ENCODE measurements at regions of chr1 and their contacts with region 1.

Region 1: DNA sequence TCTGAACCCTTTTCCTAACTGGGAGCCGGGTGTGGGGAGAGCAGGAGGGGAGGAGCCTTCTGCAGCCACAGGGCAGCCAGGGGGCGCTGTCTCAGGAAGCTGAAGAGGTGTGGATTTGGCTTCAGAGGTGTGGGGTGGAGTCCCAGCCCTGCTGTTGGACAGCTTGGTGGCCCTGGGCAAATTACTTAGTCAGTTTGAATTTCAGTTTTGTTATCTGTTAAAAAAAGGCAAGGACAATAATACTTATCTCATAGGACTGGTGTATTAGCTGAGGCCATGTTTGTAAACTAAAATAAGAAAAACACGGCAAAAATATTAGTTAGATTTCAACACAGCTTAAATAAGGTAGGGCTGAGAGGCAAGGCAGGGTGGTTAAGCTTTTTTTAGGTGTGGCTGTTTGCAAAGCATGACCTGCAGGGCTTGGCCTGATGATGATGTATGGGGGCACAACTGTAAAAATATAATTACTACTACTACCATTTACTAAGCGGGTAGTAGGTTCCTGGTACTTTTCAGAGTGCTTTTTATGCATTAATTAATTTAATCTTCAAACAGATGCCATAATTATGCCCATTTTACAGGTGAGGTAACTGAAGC is 111.8 kb downstream of the PLXNA2 start:
- DNase-seq: peak; percentile 70
- ATAC-seq: peak; percentile 89
- H3K4me3 Mint-ChIP-seq: no peak overlapping the region
- H3K27ac Mint-ChIP-seq: no peak overlapping the region
- H3K4me1 Mint-ChIP-seq: peaks cover 5% of the 10 kb centered on the region
- H3K27me3 Mint-ChIP-seq: peaks cover 13% of the 10 kb centered on the region

Region 2: GRCh38 chr1:207935166-207935583 is 197.2 kb before region 1 on chr1:
- CTCF ChIA-PET with region 1: no interaction called
- POLR2A ChIA-PET with region 1: no interaction called
- DNase-seq: no peak
- ATAC-seq: no peak
- H3K4me3 Mint-ChIP-seq: no peak overlapping the region
- H3K27ac Mint-ChIP-seq: no peak overlapping the region
- H3K4me1 Mint-ChIP-seq: no peaks in the 10 kb centered on the region
- H3K27me3 Mint-ChIP-seq: peaks cover 35% of the 10 kb centered on the region

Region 3: DNA sequence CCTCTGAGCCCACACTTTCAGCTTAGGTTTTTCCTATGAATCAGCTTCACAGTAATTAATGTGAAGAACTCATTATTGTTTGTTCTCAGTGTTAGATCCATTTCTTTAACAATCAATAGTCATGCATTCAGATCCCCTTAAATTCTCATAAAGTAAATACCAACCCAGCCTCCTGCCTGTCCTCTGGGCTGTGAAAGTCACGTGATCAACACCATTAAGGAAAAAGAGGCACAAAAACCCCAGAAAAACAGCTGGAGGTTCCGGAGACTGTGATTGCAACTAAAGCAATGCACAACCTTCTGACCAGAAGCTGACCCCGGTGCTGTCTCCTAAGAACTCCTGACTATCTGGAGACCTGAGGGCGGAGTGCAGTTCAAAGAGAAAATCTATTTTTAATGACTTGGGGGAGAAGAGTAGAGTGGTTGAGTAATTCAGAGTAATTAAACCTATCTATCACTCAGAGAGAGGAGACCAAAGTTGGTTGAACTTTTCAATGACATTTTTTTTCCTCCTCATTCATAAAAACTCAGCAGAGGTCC is 20.7 kb before region 1 on chr1:
- CTCF ChIA-PET with region 1: interaction called, 11 read pairs
- POLR2A ChIA-PET with region 1: no interaction called
- DNase-seq: no peak
- ATAC-seq: no peak
- H3K4me3 Mint-ChIP-seq: no peak overlapping the region
- H3K27ac Mint-ChIP-seq: no peak overlapping the region
- H3K4me1 Mint-ChIP-seq: no peaks in the 10 kb centered on the region
- H3K27me3 Mint-ChIP-seq: peaks cover 10% of the 10 kb centered on the region

Region 4: DNA sequence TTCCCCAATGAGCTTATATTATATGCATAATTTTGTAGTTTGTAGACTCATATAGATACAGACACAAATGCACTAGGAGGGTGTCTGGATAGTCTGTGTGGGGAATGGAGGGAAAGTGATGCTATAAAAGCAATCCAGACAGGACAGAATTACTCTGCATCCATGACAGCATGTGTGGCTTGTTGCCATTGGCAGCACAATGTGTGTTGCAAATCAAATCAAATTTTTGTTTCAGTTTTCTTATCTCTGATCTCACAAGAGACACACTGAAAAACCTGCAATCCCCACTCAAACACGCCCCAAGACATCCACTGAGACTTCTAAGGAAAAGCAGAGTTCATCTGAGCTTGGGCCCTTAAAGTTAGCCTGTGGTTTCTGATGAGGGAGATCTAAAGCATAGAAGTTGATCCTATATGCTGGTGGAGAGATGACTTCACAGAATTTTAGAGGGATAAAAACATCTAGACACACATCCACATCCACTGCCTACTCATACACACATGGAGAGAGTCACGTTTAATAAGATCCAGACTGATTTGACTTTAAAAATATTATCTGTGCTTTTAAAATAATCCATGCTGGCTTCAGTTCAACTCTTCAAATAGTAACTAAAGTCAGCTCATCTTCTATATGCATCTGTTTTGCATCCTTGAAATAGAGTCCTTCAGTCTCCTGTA is 424.8 kb after region 1 on chr1:
- CTCF ChIA-PET with region 1: no interaction called
- POLR2A ChIA-PET with region 1: no interaction called
- DNase-seq: no peak
- ATAC-seq: no peak
- H3K4me3 Mint-ChIP-seq: no peak overlapping the region
- H3K27ac Mint-ChIP-seq: no peak overlapping the region
- H3K4me1 Mint-ChIP-seq: no peaks in the 10 kb centered on the region
- H3K27me3 Mint-ChIP-seq: no peaks in the 10 kb centered on the region

Measured in activated CD8-positive, alpha-beta T cell treated with anti-CD3 and anti-CD28 coated beads, Interleukin-2, amount 10 ng/mL, durations not matched to agents 7 days and 5 days (primary cell).